ENCODE measurements at regions of chr3 and their contacts with region 1.

Region 1: DNA sequence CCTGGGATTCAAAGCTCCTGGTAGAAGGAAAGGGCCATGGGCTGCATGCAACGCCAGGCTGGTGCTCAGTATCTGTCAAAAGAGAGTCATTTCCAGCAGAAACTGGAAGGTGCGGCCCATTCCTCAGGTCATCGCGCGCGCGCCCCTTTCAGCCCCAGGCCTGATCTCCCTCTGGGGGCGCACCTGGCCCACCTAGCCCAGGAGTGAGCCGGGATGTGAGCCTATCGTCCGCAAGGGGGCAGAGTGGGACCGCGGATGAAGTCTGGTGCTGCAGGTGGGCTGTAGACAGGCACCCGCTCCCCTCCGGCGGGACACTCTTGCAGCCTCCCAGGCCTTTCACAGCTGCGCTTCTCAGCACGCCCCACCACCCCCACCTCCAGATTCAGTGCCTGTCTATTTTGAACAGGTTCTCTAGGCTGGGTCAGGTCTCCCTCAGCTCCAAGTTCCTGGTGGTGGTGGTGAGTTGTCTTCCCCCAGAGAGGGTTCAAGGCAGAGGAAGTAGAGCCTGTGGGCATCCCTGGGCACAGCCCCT is 5.8 kb upstream of the RPL29 start:
- DNase-seq: peak; percentile 87 to 91
- H3K4me3 ChIP-seq: no peak overlapping the region
- H3K4me3 Mint-ChIP-seq: peak overlapping the region; percentile 37
- H3K27ac Mint-ChIP-seq: no peak overlapping the region
- H3K4me1 ChIP-seq: peaks cover 8% of the 10 kb centered on the region
- H3K4me1 Mint-ChIP-seq: peaks cover 9% of the 10 kb centered on the region
- H3K27me3 ChIP-seq: no peaks in the 10 kb centered on the region
- H3K27me3 Mint-ChIP-seq: no peaks in the 10 kb centered on the region
- CTCF ChIP-seq: peak; percentile 95 to 98

Region 2: GRCh38 chr3:51734572-51734907 is 267.0 kb before region 1 on chr3:
- CTCF ChIA-PET with region 1: no interaction called
- POLR2A ChIA-PET with region 1: no interaction called
- intact Hi-C with region 1: no loop called
- DNase-seq: no peak
- H3K4me3 ChIP-seq: no peak overlapping the region
- H3K4me3 Mint-ChIP-seq: no peak overlapping the region
- H3K27ac Mint-ChIP-seq: no peak overlapping the region
- H3K4me1 ChIP-seq: no peaks in the 10 kb centered on the region
- H3K4me1 Mint-ChIP-seq: no peaks in the 10 kb centered on the region
- H3K27me3 ChIP-seq: no peaks in the 10 kb centered on the region
- H3K27me3 Mint-ChIP-seq: peaks cover 21% of the 10 kb centered on the region
- CTCF ChIP-seq: no peak

Region 3: DNA sequence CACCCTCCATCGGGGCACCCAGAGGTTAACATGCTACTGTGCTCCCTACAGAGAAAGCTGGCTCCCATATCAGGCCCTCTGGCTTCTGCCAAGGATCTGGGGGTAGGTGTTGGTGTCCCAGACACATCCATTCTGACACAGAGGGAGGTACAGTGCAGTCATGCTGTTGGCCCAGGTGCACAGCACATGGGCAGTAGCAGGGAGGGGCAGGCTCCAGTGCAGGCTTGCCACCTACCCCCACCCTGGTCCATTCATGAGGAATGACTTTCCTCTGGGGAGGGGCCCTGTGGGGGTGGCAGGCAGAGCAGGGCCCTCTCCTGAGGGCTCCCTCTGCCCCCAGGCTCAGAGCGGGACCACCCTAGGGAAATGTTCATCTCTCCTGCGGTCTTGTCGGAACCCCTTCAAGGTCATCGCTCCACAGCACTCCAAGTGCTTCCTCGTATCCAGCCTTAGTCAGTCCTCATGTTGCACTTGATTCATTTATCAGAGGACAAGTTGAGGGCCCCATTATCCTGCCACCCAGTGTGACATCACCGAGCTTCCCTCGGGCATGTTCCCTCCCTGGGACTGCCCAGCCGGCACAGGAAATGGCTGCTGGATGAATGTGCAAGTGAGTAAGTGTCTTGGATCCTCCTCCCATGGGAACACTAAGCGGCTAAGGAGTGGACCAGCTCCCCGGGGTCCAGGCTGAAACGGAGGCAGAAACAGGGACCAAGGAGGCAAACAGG is 44.8 kb after region 1 on chr3:
- CTCF ChIA-PET with region 1: no interaction called
- POLR2A ChIA-PET with region 1: no interaction called
- intact Hi-C with region 1: no loop called
- DNase-seq: no peak
- H3K4me3 ChIP-seq: no peak overlapping the region
- H3K4me3 Mint-ChIP-seq: no peak overlapping the region
- H3K27ac Mint-ChIP-seq: no peak overlapping the region
- H3K4me1 ChIP-seq: no peaks in the 10 kb centered on the region
- H3K4me1 Mint-ChIP-seq: no peaks in the 10 kb centered on the region
- H3K27me3 ChIP-seq: no peaks in the 10 kb centered on the region
- H3K27me3 Mint-ChIP-seq: no peaks in the 10 kb centered on the region
- CTCF ChIP-seq: no peak

Region 4: DNA sequence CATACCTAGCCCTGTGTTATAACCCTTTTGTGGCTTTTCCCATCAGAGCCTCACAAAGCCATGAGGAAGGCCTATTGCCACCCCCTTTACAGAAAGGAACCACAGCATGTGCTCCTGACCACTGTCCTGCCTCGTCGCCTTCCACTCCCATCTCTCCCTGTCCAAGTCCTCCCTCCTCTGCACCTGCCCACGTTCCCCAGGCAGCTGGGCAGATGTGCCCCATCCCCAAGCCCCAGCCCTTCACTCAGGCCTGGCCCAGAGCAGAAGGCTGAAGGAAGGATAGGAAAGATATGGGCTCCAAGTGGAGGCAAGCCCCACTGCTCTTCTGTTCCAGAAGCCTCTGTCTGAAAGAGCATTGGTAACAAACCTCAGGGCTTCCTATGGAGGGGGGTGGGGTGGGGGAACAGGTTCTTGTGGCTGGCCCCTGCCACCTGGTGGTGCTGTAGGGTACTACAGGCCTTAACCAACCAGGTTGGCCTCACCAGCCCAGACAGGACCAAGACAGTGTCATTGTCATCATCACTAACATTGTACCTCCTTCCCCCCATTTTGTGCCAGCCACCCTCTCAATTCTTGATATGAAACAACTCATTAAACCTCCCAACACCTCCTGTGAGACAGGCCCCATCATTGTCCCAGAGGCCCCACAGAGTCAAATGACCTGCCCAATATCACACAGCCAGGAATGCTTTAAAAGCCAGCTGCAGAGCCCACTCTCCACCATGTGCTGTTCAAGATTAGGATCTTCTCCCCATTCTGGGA is 142.7 kb after region 1 on chr3:
- CTCF ChIA-PET with region 1: interaction called, 9 read pairs
- POLR2A ChIA-PET with region 1: no interaction called
- intact Hi-C with region 1: loop called (anchors 1 kb)
- DNase-seq: peak; percentile 82 to 84
- H3K4me3 ChIP-seq: no peak overlapping the region
- H3K4me3 Mint-ChIP-seq: no peak overlapping the region
- H3K27ac Mint-ChIP-seq: no peak overlapping the region
- H3K4me1 ChIP-seq: no peaks in the 10 kb centered on the region
- H3K4me1 Mint-ChIP-seq: no peaks in the 10 kb centered on the region
- H3K27me3 ChIP-seq: no peaks in the 10 kb centered on the region
- H3K27me3 Mint-ChIP-seq: no peaks in the 10 kb centered on the region
- CTCF ChIP-seq: peak; percentile 91 to 97

Measured in Caco-2 (cell line).